ENCODE measurements at regions of chr19 and their contacts with region 1.

Region 1: DNA sequence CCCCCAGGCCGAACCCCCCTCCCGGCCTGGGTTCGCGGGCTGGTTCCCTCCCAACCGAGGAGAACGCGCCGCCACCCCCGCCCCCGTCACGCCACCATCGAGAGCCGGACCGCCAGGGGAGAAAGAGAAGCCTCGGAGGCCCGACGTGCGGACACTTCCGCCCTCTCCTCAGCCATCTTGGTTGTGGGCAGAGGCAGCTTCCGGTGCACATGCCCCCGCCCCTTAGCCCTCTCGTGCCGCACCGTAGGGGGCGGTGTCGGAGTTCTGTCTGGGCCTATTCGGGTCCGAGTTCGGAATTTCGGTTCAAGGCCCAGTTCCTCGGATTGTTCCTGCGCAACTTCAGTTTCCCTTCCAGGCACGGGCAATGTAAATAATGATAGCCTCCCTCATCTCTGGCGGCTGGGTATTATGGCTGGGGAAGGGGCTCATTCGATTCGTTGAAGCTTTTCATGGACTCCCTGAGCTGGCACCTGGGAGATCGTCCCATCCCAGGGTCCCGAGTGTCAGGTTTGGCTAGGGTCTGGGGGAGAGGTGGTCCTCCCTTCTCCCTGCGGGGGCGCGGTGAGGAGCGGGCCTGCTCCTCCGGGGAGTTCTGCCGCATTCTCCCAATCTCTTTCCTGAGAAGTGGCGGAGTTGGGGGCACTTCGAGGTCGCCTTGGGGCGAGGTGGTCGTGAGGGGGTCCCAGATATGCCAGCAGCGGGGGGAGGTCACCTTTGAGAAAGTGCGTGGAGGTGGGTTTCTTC is at the starts of genes IER2 and STX10:
- DNase-seq: peak; percentile 86 to 97 (median 94)
- ATAC-seq: peak; percentile 55
- H3K4me3 ChIP-seq: peak within 1 kb of the TSS; percentile 77 to 94
- H3K4me3 Mint-ChIP-seq: peak within 1 kb of the TSS; percentile 98
- H3K27ac ChIP-seq: peak within 1 kb of the TSS; percentile 96 to 99
- H3K27ac Mint-ChIP-seq: peak within 1 kb of the TSS; percentile 93
- H3K4me1 ChIP-seq: peaks cover 11% of the 10 kb centered on the region
- H3K4me1 Mint-ChIP-seq: peaks cover 26% of the 10 kb centered on the region
- H3K27me3 ChIP-seq: no peaks in the 10 kb centered on the region
- H3K27me3 Mint-ChIP-seq: no peaks in the 10 kb centered on the region
- CTCF ChIP-seq: peak; percentile 51
- total RNA-seq, gene IER2: 223 to 229 TPM
- total RNA-seq, gene STX10: 35.7 to 37.5 TPM

Region 2: GRCh38 chr19:12782229-12783028 is 367.9 kb before region 1 on chr19:
- CTCF ChIA-PET with region 1: no interaction called
- POLR2A ChIA-PET with region 1: no interaction called
- intact Hi-C with region 1: loop called in 1 of 2 experiments (anchors 5 kb)
- DNase-seq: peak; percentile 88 to 99 (median 96)
- ATAC-seq: peak; percentile 75
- H3K4me3 ChIP-seq: peak overlapping the region; percentile 50 to 62
- H3K4me3 Mint-ChIP-seq: peak overlapping the region; percentile 80
- H3K27ac ChIP-seq: peak overlapping the region; percentile 91 to 99
- H3K27ac Mint-ChIP-seq: peak overlapping the region; percentile 95
- H3K4me1 ChIP-seq: peaks cover 68% of the 10 kb centered on the region
- H3K4me1 Mint-ChIP-seq: peaks cover 38% of the 10 kb centered on the region
- H3K27me3 ChIP-seq: no peaks in the 10 kb centered on the region
- H3K27me3 Mint-ChIP-seq: no peaks in the 10 kb centered on the region
- CTCF ChIP-seq: no peak

Region 3: DNA sequence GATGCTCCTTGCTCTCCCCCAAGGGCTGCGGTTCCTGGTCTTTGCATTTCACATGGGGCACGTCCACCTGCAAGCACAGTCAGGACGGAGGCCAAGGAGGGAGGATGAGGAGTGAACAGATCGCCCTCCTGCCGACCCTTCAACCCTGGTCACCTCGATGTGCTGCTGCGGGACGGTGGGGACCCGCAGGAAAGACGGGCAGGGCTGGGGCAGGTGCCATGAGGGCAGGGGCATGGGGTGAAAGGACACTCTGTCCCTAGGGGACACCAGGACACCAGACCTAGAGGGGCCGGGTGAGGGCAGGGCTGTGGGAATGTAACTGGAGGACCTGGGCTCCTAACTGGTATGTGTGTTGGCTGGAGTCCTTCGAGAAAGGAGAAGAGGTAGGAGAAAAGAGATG is 232.1 kb before region 1 on chr19:
- CTCF ChIA-PET with region 1: no interaction called
- POLR2A ChIA-PET with region 1: no interaction called
- intact Hi-C with region 1: no loop called
- DNase-seq: no peak
- ATAC-seq: no peak
- H3K4me3 ChIP-seq: no peak overlapping the region
- H3K4me3 Mint-ChIP-seq: peak overlapping the region; percentile 35
- H3K27ac ChIP-seq: no peak overlapping the region
- H3K27ac Mint-ChIP-seq: no peak overlapping the region
- H3K4me1 ChIP-seq: peaks cover 27% of the 10 kb centered on the region
- H3K4me1 Mint-ChIP-seq: peaks cover 35% of the 10 kb centered on the region
- H3K27me3 ChIP-seq: no peaks in the 10 kb centered on the region
- H3K27me3 Mint-ChIP-seq: no peaks in the 10 kb centered on the region
- CTCF ChIP-seq: no peak

Region 4: DNA sequence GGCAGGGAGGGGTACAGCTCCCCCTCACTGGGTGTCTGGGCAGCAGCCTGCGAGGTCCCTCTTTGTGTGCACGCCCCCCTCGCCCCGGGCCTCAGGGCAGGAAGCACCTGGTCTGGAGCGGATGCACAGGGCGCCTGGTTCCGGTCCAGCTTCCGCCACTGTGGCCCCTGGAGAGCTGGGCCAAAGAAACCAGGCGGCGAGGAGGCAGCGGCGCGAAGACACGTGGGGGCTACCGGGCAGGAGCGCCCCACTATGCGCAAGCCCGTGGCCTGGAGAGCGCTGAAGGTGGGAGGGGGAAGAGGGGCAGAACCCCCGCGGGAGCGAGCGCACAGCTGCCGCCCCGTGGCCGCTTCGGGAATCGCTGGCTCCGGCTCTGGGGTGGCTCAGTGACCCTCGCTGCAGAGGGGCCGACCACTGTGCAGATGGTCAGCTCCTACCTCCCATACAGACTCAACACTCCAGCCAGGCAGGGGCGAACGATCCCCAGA is 46.0 kb before region 1 on chr19:
- CTCF ChIA-PET with region 1: interaction called, 6 read pairs
- POLR2A ChIA-PET with region 1: interaction called, 6 read pairs
- intact Hi-C with region 1: loop called (anchors 1 to 5 kb)
- DNase-seq: peak in 8 of 9 experiments; percentile 53 to 79 (median 70)
- ATAC-seq: peak; percentile 64
- H3K4me3 ChIP-seq: peak overlapping the region; percentile 59 to 81
- H3K4me3 Mint-ChIP-seq: peak overlapping the region; percentile 89
- H3K27ac ChIP-seq: peak overlapping the region; percentile 60 to 63
- H3K27ac Mint-ChIP-seq: peak overlapping the region; percentile 87
- H3K4me1 ChIP-seq: peaks cover 51% of the 10 kb centered on the region
- H3K4me1 Mint-ChIP-seq: peaks cover 34% of the 10 kb centered on the region
- H3K27me3 ChIP-seq: no peaks in the 10 kb centered on the region
- H3K27me3 Mint-ChIP-seq: no peaks in the 10 kb centered on the region
- CTCF ChIP-seq: peak; percentile 92

Region 5: DNA sequence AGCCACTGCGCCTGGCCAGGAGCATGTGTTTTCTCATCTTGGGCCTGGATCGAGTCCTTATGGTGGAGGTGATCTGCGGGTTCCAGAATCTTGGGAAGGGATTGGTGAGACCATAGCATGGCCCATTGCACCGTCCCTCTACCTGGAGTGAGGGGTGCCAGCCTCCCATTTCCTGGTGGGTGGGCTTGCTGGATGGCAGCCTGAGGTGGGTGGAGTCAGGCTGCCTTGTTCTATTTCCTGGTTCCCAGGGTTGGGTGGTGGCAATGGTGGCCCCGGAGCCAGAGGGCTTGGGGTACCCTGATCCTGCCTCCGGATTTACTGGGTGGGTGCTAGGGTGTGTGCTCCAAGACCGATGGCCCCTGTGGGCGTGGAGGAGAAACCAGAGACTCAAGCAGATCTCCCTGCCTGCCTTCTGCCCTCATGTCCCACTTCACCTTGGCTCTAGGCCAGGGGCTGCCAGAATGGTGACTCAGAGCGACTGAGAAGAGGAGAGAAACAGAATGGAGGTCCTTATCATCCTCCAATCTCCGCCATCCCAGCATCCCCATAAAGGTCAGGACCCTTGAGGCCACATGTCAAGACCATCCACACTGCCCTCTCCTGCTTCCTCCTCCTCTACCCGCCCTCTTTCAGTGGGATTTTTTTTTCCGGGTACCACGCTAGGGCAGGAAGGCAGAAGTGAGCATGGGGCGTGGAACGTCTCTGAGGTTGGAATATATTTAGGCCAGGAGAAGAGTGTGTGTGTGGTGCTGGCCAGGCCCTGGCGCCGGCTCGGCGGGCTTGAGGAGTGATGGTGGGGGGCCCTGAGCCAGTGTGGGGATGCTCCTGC is 21.9 kb after region 1 on chr19:
- CTCF ChIA-PET with region 1: interaction called, 12 read pairs
- POLR2A ChIA-PET with region 1: interaction called, 246 read pairs
- intact Hi-C with region 1: loop called (anchors 1 to 2 kb)
- DNase-seq: peak; percentile 47 to 90 (median 87)
- ATAC-seq: peak; percentile 15
- H3K4me3 ChIP-seq: peak overlapping the region; percentile 42 to 51
- H3K4me3 Mint-ChIP-seq: peak overlapping the region; percentile 85
- H3K27ac ChIP-seq: peak overlapping the region; percentile 50 to 62
- H3K27ac Mint-ChIP-seq: peak overlapping the region; percentile 98
- H3K4me1 ChIP-seq: peaks cover 65% of the 10 kb centered on the region
- H3K4me1 Mint-ChIP-seq: peaks cover 55% of the 10 kb centered on the region
- H3K27me3 ChIP-seq: no peaks in the 10 kb centered on the region
- H3K27me3 Mint-ChIP-seq: no peaks in the 10 kb centered on the region
- CTCF ChIP-seq: no peak

Region 6: GRCh38 chr19:13212759-13213330 is 62.5 kb after region 1 on chr19:
- CTCF ChIA-PET with region 1: interaction called, 6 read pairs
- POLR2A ChIA-PET with region 1: interaction called, 10 read pairs
- intact Hi-C with region 1: loop called (anchors 1 to 2 kb)
- DNase-seq: peak; percentile 38 to 84 (median 77)
- ATAC-seq: peak; percentile 27
- H3K4me3 ChIP-seq: no peak overlapping the region
- H3K4me3 Mint-ChIP-seq: no peak overlapping the region
- H3K27ac ChIP-seq: no peak overlapping the region
- H3K27ac Mint-ChIP-seq: no peak overlapping the region
- H3K4me1 ChIP-seq: peaks cover 5% of the 10 kb centered on the region
- H3K4me1 Mint-ChIP-seq: peaks cover 22% of the 10 kb centered on the region
- H3K27me3 ChIP-seq: no peaks in the 10 kb centered on the region
- H3K27me3 Mint-ChIP-seq: no peaks in the 10 kb centered on the region
- CTCF ChIP-seq: peak; percentile 47

Region 7: DNA sequence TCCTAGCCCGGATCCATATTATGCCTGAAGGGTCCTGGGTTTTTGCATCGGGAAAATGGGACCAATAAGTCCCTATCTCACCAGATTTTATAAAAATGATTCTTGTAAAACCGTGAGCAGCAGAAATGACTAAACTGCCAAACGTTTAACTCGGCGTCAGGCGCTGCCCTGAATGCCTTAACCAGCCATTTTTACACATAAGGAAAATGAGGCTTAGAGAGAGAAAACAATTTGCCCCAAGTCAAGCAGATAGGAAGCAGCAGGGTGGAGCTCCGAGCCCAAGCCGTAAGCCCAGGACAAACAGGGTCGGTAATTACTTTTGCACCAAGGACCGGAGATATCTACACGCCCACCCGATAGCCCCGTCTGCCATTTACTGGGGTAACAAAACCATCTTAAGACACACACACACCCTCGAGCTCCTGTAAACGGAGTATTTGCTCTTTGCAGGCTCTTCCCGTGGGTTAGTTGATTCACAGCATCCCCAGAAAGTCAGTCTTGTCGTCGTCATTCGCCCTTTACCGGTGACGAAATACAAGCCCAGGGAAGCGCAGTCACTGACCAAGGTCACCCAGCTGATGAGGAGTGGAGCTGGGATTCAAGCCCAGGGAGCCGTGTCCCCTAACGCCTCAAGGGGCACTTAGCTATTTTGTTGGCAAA is 597.9 kb after region 1 on chr19:
- CTCF ChIA-PET with region 1: no interaction called
- POLR2A ChIA-PET with region 1: interaction called, 4 read pairs
- intact Hi-C with region 1: loop called in 1 of 2 experiments (anchors 5 kb)
- DNase-seq: peak in 2 of 9 experiments; percentile 23 to 55
- ATAC-seq: peak; percentile 8
- H3K4me3 ChIP-seq: peak overlapping the region; percentile 85 to 97
- H3K4me3 Mint-ChIP-seq: peak overlapping the region; percentile 90
- H3K27ac ChIP-seq: peak overlapping the region; percentile 96 to 98
- H3K27ac Mint-ChIP-seq: peak overlapping the region; percentile 92
- H3K4me1 ChIP-seq: peaks cover 22% of the 10 kb centered on the region
- H3K4me1 Mint-ChIP-seq: peaks cover 23% of the 10 kb centered on the region
- H3K27me3 ChIP-seq: no peaks in the 10 kb centered on the region
- H3K27me3 Mint-ChIP-seq: no peaks in the 10 kb centered on the region
- CTCF ChIP-seq: no peak

Region 8: GRCh38 chr19:14006243-14006765 is 855.9 kb after region 1 on chr19 and contains the start of gene RFX1:
- CTCF ChIA-PET with region 1: no interaction called
- POLR2A ChIA-PET with region 1: no interaction called
- intact Hi-C with region 1: loop called (anchors 2 to 10 kb)
- DNase-seq: peak; percentile 99 to 100 (median 100)
- ATAC-seq: peak; percentile 69
- H3K4me3 ChIP-seq: peak within 1 kb of the TSS; percentile 87 to 92
- H3K4me3 Mint-ChIP-seq: peak within 1 kb of the TSS; percentile 89
- H3K27ac ChIP-seq: peak within 1 kb of the TSS; percentile 99 to 100
- H3K27ac Mint-ChIP-seq: peak within 1 kb of the TSS; percentile 98
- H3K4me1 ChIP-seq: peaks cover 40% of the 10 kb centered on the region
- H3K4me1 Mint-ChIP-seq: peaks cover 42% of the 10 kb centered on the region
- H3K27me3 ChIP-seq: no peaks in the 10 kb centered on the region
- H3K27me3 Mint-ChIP-seq: no peaks in the 10 kb centered on the region
- CTCF ChIP-seq: no peak
- total RNA-seq, gene RFX1: 11.2 to 13.0 TPM